Right ventricle myocardium superior (tissue), 1 donor: ENCODE measurements at regions of chr15 and their contacts with region 1.

Region 1: DNA sequence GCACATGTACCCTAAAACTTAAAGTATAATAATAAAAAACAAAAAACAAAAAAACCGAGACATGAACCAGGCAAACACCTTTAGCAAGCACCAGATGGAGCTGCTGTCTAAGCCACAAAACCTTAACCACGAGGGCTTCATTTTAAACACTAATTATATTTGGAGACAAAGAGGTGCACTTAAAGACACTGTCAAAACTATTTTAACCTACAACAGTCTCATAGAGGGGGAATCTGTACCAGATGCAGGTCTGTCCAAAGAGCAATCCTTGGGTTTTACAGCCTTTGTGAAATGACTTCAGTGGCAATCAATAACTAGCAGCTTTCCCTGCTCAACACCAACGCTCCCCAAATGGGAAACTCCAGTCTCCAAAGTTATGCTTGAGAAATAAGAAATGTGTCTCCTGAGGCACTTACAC is 115.7 kb upstream of the TSPAN3 start:
- DNase-seq: no peak
- ATAC-seq: peak; percentile 68

Region 2: GRCh38 chr15:77138167-77138522 is 48.5 kb before region 1 on chr15:
- intact Hi-C with region 1: no loop called
- DNase-seq: no peak
- ATAC-seq: no peak

Region 3: GRCh38 chr15:77352887-77353286 is 166.3 kb after region 1 on chr15:
- intact Hi-C with region 1: no loop called
- DNase-seq: no peak
- ATAC-seq: no peak

Region 4: GRCh38 chr15:77496710-77497103 is 310.1 kb after region 1 on chr15:
- intact Hi-C with region 1: loop called (anchors 2 kb)
- DNase-seq: peak; percentile 95
- ATAC-seq: peak; percentile 86